Activated T-helper 1 cell treated with anti-CD3 and anti-CD28 coated beads, Interleukin-12 subunit alpha, Interleukin-12 subunit beta, Interleukin-2, Interleukin-4 antibody, amounts not matched to agents 30 ng/mL and 10 ng/mL and 1 ng/mL, durations not matched to agents 14 hours and 24 hours and 36 hours (primary cell): ENCODE measurements at regions of chr10 and their contacts with region 1.

Region 1: DNA sequence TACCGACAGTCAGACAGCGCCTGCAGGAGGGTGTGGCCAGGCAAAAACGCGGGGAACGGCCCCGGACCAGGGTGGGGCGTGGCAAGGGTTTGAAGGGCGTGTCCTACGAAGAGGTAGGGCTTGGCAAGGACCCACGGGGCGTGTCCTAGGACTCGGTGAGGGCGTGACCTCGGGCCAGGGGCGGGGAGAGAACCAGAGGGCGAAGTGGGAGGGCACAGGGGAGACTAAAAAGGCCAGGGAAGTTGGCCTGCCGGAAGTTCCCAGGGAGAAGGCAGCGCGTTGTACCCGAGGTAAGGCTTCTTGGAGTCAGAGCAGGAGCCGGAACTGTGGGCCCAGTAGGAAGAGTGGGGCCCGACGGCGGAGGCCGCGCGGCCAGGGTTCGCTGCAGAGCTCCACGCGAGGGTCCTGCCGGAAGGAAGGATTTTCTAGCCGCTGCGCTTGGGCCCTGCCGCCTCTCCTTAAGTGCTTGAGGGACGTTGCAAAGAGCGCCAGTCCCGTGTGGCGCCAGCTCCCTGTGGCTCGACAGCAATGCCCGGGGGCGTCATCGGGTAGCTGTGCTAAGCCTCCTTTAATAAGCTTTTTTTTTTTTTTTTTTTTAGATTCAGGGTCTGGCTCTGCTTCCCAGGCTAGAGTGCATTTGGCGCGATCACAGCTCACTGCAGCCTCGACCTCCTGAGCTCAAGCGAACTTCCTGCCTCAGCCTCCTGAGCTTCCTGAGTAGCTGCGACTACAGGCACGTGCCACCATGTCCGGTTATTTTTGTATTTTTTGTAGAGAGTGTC is at the start of gene PTER:
- DNase-seq: peak; percentile 98
- H3K4me3 Mint-ChIP-seq: peak within 1 kb of the TSS; percentile 88
- H3K27ac Mint-ChIP-seq: peak within 1 kb of the TSS; percentile 88
- H3K4me1 Mint-ChIP-seq: peaks cover 40% of the 10 kb centered on the region
- H3K27me3 Mint-ChIP-seq: peaks cover 9% of the 10 kb centered on the region
- total RNA-seq, gene PTER: 10.7 and 12.6 TPM in 2 replicates

Region 2: DNA sequence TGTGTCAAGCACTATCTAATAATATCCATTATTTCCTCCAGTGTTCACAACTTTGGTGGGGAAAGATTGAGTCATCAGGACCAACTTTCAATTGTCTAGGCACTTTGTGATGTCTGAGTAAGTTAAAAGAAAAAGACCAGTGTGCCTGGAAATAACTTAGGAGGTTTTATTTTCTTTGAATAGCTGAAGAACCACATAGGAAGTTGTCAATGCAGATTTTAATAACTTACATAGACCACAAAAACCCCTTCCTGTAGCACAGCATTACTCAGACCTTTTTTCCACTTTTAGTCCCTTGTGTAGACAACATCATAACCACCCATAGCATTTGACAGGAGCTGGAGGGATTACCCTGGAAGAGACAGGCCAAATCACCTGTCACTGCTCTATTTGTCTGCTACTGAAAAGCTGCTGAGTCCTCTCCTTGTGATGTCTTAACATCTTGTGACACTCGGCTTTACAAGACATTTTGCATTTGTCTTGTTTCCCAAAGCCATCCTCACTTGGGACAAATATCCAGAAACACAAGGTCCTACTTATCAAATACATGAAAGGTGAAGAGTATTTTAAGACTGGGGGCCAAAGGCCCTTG is 241.7 kb before region 1 on chr10:
- intact Hi-C with region 1: loop called (anchors 1 kb)
- DNase-seq: peak; percentile 8
- H3K4me3 Mint-ChIP-seq: peak overlapping the region; percentile 16
- H3K27ac Mint-ChIP-seq: peak overlapping the region; percentile 3
- H3K4me1 Mint-ChIP-seq: peaks cover 31% of the 10 kb centered on the region
- H3K27me3 Mint-ChIP-seq: peaks cover 2% of the 10 kb centered on the region

Region 3: DNA sequence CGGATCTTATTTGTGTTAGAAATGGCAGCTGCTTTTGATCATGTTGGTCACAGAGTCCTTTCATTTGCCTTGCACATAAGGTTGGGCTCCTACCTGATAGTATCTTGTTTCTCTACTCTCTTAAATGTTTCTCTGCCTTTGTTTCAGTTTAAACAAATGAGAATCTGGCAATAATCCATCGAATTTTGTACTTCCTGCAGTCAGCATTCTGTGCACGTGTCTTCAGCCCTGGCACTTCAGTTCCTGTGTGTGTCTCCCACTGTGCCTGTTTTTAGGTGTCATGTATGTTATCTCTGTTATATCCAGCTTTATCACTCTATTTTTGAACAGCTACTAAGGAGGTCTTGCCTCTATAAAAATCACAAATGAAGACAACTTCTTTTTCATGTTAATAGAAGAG is 28.6 kb before region 1 on chr10:
- intact Hi-C with region 1: no loop called
- DNase-seq: no peak
- H3K4me3 Mint-ChIP-seq: no peak overlapping the region
- H3K27ac Mint-ChIP-seq: no peak overlapping the region
- H3K4me1 Mint-ChIP-seq: no peaks in the 10 kb centered on the region
- H3K27me3 Mint-ChIP-seq: peaks cover 9% of the 10 kb centered on the region

Region 4: DNA sequence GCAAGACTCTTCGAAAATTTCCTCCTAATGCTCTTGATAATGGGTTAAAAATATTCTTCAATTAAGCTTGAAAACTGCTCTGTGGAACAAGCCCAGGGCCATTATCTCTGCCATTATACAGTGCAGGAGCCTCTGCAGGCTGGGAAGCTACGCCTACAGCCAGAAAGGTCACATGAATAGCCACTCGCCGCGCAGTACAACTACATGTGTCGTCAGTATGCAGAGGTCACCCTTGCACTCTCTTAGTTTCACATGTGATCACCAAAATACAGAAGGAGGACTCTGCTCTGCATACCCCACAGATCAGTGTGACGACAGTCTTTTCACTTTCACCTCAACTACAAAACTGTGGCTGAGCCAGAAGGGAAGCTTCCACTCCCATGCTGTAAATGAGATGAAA is 226.5 kb after region 1 on chr10:
- intact Hi-C with region 1: loop called (anchors 5 kb)
- DNase-seq: no peak
- H3K4me3 Mint-ChIP-seq: no peak overlapping the region
- H3K27ac Mint-ChIP-seq: no peak overlapping the region
- H3K4me1 Mint-ChIP-seq: peaks cover 12% of the 10 kb centered on the region
- H3K27me3 Mint-ChIP-seq: no peaks in the 10 kb centered on the region

Region 5: GRCh38 chr10:17200912-17201793 is 764.2 kb after region 1 on chr10 and contains the start of gene TRDMT1:
- intact Hi-C with region 1: loop called (anchors 2 kb)
- DNase-seq: peak; percentile 78
- H3K4me3 Mint-ChIP-seq: peak within 1 kb of the TSS; percentile 84
- H3K27ac Mint-ChIP-seq: peak within 1 kb of the TSS; percentile 77
- H3K4me1 Mint-ChIP-seq: peaks cover 27% of the 10 kb centered on the region
- H3K27me3 Mint-ChIP-seq: peaks cover 2% of the 10 kb centered on the region
- total RNA-seq, gene TRDMT1: 3.3 and 4.2 TPM in 2 replicates